CD4-positive, alpha-beta memory T cell (primary cell): ENCODE measurements at regions of chr2 and their contacts with region 1.

Region 1: GRCh38 chr2:129605646-129606045 is 373.8 kb upstream of the RAB6C start:
- DNase-seq: no peak
- H3K4me3 ChIP-seq: no peak overlapping the region
- H3K4me3 Mint-ChIP-seq: no peak overlapping the region
- H3K27ac ChIP-seq: no peak overlapping the region
- H3K27ac Mint-ChIP-seq: no peak overlapping the region
- H3K4me1 ChIP-seq: no peaks in the 10 kb centered on the region
- H3K4me1 Mint-ChIP-seq: no peaks in the 10 kb centered on the region
- H3K27me3 ChIP-seq: no peaks in the 10 kb centered on the region
- H3K27me3 Mint-ChIP-seq: peaks cover 2 to 3% of the 10 kb centered on the region in 2 donors

Region 2: GRCh38 chr2:129656081-129656598 is 50.5 kb after region 1 on chr2:
- CTCF ChIA-PET with region 1: no interaction called
- POLR2A ChIA-PET with region 1: no interaction called
- intact Hi-C with region 1: loop called (anchors 1 kb)
- DNase-seq: no peak
- H3K4me3 ChIP-seq: no peak overlapping the region
- H3K4me3 Mint-ChIP-seq: no peak overlapping the region
- H3K27ac ChIP-seq: no peak overlapping the region
- H3K27ac Mint-ChIP-seq: no peak overlapping the region
- H3K4me1 ChIP-seq: no peaks in the 10 kb centered on the region
- H3K4me1 Mint-ChIP-seq: no peaks in the 10 kb centered on the region
- H3K27me3 ChIP-seq: no peaks in the 10 kb centered on the region
- H3K27me3 Mint-ChIP-seq: peaks cover 0 to 3% of the 10 kb centered on the region in 2 donors